CD4-positive, alpha-beta T cell (primary cell): ENCODE measurements at regions of chr6 and their contacts with region 1.

Region 1: GRCh38 chr6:53348371-53349208 is at the start of gene ELOVL5:
- DNase-seq: peak; percentile 82 to 99 (median 92)
- ATAC-seq: peak; percentile 74
- H3K4me3 ChIP-seq: peak within 1 kb of the TSS; percentile 91
- H3K4me3 Mint-ChIP-seq: peak within 1 kb of the TSS; percentile 98
- H3K27ac ChIP-seq: peak within 1 kb of the TSS; percentile 91 to 92
- H3K27ac Mint-ChIP-seq: peak within 1 kb of the TSS; percentile 94
- H3K4me1 ChIP-seq: peaks cover 29% of the 10 kb centered on the region
- H3K4me1 Mint-ChIP-seq: peaks cover 51% of the 10 kb centered on the region
- H3K27me3 ChIP-seq: no peaks in the 10 kb centered on the region
- H3K27me3 Mint-ChIP-seq: no peaks in the 10 kb centered on the region
- CTCF ChIP-seq: no peak
- total RNA-seq, gene ELOVL5: 78.0 to 86.8 TPM

Region 2: DNA sequence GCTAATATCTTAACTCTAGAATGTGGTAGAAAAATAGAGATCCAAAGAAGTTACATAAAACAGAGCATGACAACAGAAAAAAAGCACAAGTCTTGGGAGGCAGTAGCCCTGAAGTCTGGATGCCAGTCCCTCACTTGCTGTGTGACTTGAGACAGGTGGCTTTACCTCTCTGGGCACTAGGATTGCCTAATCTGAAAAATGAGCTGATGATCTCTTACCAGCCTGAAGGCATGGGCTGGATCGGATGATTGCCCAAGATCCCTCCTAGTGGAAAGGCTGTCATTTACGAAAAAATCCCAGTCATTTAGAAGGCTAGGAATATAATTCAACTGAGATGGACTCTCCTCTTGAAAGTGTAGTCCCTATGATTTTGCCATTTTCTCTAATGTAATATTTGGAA is 189.0 kb before region 1 on chr6:
- CTCF ChIA-PET with region 1: no interaction called
- POLR2A ChIA-PET with region 1: no interaction called
- intact Hi-C with region 1: no loop called
- DNase-seq: no peak
- ATAC-seq: no peak
- H3K4me3 ChIP-seq: no peak overlapping the region
- H3K4me3 Mint-ChIP-seq: no peak overlapping the region
- H3K27ac ChIP-seq: no peak overlapping the region
- H3K27ac Mint-ChIP-seq: no peak overlapping the region
- H3K4me1 ChIP-seq: no peaks in the 10 kb centered on the region
- H3K4me1 Mint-ChIP-seq: peaks cover 7% of the 10 kb centered on the region
- H3K27me3 ChIP-seq: no peaks in the 10 kb centered on the region
- H3K27me3 Mint-ChIP-seq: no peaks in the 10 kb centered on the region
- CTCF ChIP-seq: no peak

Region 3: GRCh38 chr6:53189554-53189953 is 159.0 kb before region 1 on chr6:
- CTCF ChIA-PET with region 1: no interaction called
- POLR2A ChIA-PET with region 1: interaction called, 12 read pairs
- intact Hi-C with region 1: no loop called
- DNase-seq: no peak
- ATAC-seq: no peak
- H3K4me3 ChIP-seq: no peak overlapping the region
- H3K4me3 Mint-ChIP-seq: no peak overlapping the region
- H3K27ac ChIP-seq: no peak overlapping the region
- H3K27ac Mint-ChIP-seq: no peak overlapping the region
- H3K4me1 ChIP-seq: peaks cover 21% of the 10 kb centered on the region
- H3K4me1 Mint-ChIP-seq: peaks cover 22% of the 10 kb centered on the region
- H3K27me3 ChIP-seq: no peaks in the 10 kb centered on the region
- H3K27me3 Mint-ChIP-seq: no peaks in the 10 kb centered on the region
- CTCF ChIP-seq: no peak

Region 4: GRCh38 chr6:53300656-53301551 is 47.7 kb before region 1 on chr6:
- CTCF ChIA-PET with region 1: interaction called, 8 read pairs
- POLR2A ChIA-PET with region 1: interaction called, 63 read pairs
- intact Hi-C with region 1: loop called (anchors 2 to 5 kb)
- DNase-seq: peak in 8 of 14 experiments; percentile 12 to 72 (median 36)
- ATAC-seq: peak; percentile 13
- H3K4me3 ChIP-seq: peak overlapping the region; percentile 8
- H3K4me3 Mint-ChIP-seq: peak overlapping the region; percentile 35
- H3K27ac ChIP-seq: peak overlapping the region in 1 of 2 donors; percentile 51
- H3K27ac Mint-ChIP-seq: peak overlapping the region; percentile 83
- H3K4me1 ChIP-seq: peaks cover 54% of the 10 kb centered on the region
- H3K4me1 Mint-ChIP-seq: peaks cover 86% of the 10 kb centered on the region
- H3K27me3 ChIP-seq: no peaks in the 10 kb centered on the region
- H3K27me3 Mint-ChIP-seq: no peaks in the 10 kb centered on the region
- CTCF ChIP-seq: no peak

Region 5: DNA sequence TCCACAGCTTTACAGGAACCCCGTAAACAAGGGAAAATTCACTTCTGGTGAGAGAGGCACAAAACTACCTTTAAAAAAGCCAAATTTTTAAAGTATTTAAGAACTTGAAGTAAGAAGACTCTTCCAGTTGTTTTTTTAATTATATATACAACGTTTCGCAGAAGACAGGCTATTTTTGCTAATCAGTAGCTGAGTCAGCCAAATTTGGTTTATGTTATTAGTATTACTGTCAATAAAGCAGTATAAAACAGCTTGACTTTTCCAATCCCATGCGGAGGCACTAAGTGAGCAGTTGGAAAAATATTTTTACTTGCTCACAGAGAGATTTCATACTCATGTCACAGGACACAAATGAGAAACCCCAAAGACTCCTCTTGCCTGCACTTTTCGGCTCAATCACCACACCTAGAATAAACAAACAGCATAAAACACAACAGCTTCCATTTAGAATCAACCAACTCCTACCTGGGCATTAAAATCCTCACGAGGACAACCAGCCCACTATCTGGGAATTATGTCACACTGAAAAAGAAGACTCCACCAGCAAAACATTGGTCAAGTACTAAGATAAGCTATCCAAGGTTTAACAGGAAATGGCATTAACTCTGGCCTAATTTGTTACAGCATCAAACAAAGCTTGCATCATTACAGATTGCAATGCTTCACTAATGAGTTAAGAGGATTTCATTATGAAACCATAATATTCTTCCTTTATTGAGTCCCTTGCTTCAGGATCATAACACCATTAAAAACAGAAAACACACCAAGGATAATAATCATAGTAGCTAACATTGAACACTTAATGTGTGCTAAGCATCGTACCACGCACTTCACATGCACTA is 26.2 kb before region 1 on chr6:
- CTCF ChIA-PET with region 1: no interaction called
- POLR2A ChIA-PET with region 1: interaction called, 11 read pairs
- intact Hi-C with region 1: no loop called
- DNase-seq: no peak
- ATAC-seq: no peak
- H3K4me3 ChIP-seq: no peak overlapping the region
- H3K4me3 Mint-ChIP-seq: no peak overlapping the region
- H3K27ac ChIP-seq: no peak overlapping the region
- H3K27ac Mint-ChIP-seq: peak overlapping the region; percentile 61
- H3K4me1 ChIP-seq: peaks cover 32% of the 10 kb centered on the region
- H3K4me1 Mint-ChIP-seq: peaks cover 79% of the 10 kb centered on the region
- H3K27me3 ChIP-seq: no peaks in the 10 kb centered on the region
- H3K27me3 Mint-ChIP-seq: no peaks in the 10 kb centered on the region
- CTCF ChIP-seq: no peak

Region 6: GRCh38 chr6:53359072-53359842 is 10.7 kb after region 1 on chr6:
- CTCF ChIA-PET with region 1: interaction called, 6 read pairs
- POLR2A ChIA-PET with region 1: interaction called, 61 read pairs
- intact Hi-C with region 1: loop called (anchors 1 kb)
- DNase-seq: peak; percentile 76 to 95 (median 87)
- ATAC-seq: peak; percentile 77
- H3K4me3 ChIP-seq: peak overlapping the region; percentile 80
- H3K4me3 Mint-ChIP-seq: peak overlapping the region; percentile 87
- H3K27ac ChIP-seq: peak overlapping the region; percentile 93 to 96
- H3K27ac Mint-ChIP-seq: peak overlapping the region; percentile 93
- H3K4me1 ChIP-seq: peaks cover 43% of the 10 kb centered on the region
- H3K4me1 Mint-ChIP-seq: peaks cover 41% of the 10 kb centered on the region
- H3K27me3 ChIP-seq: no peaks in the 10 kb centered on the region
- H3K27me3 Mint-ChIP-seq: no peaks in the 10 kb centered on the region
- CTCF ChIP-seq: no peak

Region 7: GRCh38 chr6:53544470-53545308 is 196.1 kb after region 1 on chr6 and contains the start of gene GCLC:
- CTCF ChIA-PET with region 1: no interaction called
- POLR2A ChIA-PET with region 1: no interaction called
- intact Hi-C with region 1: loop called (anchors 5 kb)
- DNase-seq: peak; percentile 71 to 95 (median 83)
- ATAC-seq: peak; percentile 60
- H3K4me3 ChIP-seq: peak within 1 kb of the TSS; percentile 54
- H3K4me3 Mint-ChIP-seq: peak within 1 kb of the TSS; percentile 99
- H3K27ac ChIP-seq: peak within 1 kb of the TSS in 1 of 2 donors; percentile 31
- H3K27ac Mint-ChIP-seq: peak within 1 kb of the TSS; percentile 69
- H3K4me1 ChIP-seq: peaks cover 43% of the 10 kb centered on the region
- H3K4me1 Mint-ChIP-seq: peaks cover 74% of the 10 kb centered on the region
- H3K27me3 ChIP-seq: no peaks in the 10 kb centered on the region
- H3K27me3 Mint-ChIP-seq: no peaks in the 10 kb centered on the region
- CTCF ChIP-seq: peak; percentile 67
- total RNA-seq, gene GCLC: 8.9 to 10.1 TPM